ENCODE measurements at regions of chr2 and their contacts with region 1.

Region 1: DNA sequence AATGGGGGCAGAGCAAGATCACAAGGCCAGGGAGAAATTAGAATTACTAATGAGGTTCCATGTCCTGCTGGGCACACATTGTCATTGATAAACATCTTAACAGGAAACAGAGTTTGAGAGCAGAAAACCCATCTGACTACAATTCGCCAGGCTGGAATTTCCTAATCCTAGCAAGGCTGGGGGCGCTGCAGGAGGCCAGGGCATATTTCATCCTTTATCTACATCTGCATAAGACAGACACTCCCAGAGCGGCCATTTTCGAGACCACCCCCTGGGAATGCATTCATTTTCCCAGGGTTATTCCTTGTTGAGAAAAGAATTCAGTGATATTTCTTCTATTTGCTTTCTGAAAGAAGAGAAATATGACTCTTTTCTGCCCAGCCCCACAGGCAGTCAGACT is 152.7 kb downstream of the SUCLG1 start:
- DNase-seq: no peak
- ATAC-seq: no peak
- H3K4me3 ChIP-seq: no peak overlapping the region
- H3K27ac ChIP-seq: no peak overlapping the region
- H3K4me1 ChIP-seq: no peaks in the 10 kb centered on the region
- H3K27me3 ChIP-seq: peaks cover 0 to 2% (median 2%) of the 10 kb centered on the region in 3 donors
- CTCF ChIP-seq: no peak

Region 2: DNA sequence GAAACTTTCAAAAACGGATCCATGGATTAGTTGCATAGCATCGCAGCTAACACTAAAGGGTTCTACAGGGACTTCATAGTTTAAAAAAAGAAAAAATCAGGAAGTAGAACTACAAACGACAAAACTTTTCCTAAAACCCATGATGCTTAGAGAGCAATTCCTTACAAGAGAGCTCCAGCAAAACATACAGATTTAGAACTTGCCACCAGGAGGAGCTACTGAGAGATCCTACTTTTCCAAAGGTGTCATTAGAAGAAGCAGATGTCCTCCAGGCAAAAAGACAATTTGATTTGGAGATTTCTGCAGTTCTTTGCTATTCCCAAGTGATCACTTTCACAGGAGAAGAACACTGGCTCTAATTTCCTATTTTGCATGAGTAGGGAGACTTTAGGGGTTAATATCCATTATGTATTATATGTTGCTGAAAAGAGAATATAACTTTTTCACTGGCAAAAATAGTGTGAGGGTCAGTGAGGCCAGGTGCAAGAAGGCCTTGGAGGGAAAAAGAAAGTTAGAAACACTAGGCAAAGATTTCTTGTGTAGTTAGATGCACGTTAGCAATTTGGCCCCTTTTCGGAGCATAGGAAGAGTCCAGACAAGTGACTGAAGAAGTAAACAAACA is 283.4 kb before region 1 on chr2:
- intact Hi-C with region 1: loop called in 1 of 2 experiments (anchors 5 kb)
- DNase-seq: no peak
- ATAC-seq: no peak
- H3K4me3 ChIP-seq: no peak overlapping the region
- H3K27ac ChIP-seq: no peak overlapping the region
- H3K4me1 ChIP-seq: no peaks in the 10 kb centered on the region
- H3K27me3 ChIP-seq: no peaks in the 10 kb centered on the region
- CTCF ChIP-seq: peak; percentile 38

Region 3: DNA sequence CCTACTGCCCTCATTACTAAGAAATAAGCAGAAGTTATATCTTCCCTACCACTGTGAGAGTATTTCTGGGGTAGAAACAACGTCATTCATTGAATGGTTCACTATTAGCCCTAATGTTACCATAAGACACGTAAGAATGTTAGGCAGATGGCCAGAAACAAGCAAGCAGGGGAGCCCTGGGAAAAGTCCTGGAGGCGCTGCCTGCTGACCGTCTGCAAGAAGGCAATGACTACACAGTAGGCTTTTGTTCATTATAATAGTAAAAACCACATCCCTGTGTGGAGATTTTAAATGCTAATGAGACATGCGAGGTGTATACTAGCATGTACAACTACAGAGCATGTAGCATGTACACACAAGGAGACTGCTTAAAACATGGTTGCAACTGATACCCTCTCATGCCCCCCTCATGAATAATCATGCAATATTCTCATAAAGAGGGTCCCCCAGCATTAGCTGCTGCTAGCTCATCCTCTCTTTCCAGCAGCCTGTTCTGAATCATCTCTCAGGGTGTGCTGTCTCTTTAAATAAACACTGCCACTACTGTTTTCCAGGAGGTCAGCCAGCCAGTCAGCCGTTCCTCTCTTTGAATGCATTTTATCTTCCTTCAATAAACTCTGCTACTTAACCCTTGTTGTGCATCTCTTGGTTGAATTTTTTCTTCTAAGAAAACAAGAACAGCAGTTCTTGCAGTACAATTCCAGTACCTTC is 129.1 kb after region 1 on chr2:
- intact Hi-C with region 1: no loop called
- DNase-seq: no peak
- ATAC-seq: no peak
- H3K4me3 ChIP-seq: no peak overlapping the region
- H3K27ac ChIP-seq: no peak overlapping the region
- H3K4me1 ChIP-seq: no peaks in the 10 kb centered on the region
- H3K27me3 ChIP-seq: no peaks in the 10 kb centered on the region
- CTCF ChIP-seq: no peak